ENCODE measurements at regions of chr22 and their contacts with region 1.

Region 1: GRCh38 chr22:28051787-28052356 is 132.8 kb upstream of the PITPNB start:
- DNase-seq: peak; percentile 56 to 84 (median 79)
- H3K4me3 ChIP-seq: no peak overlapping the region
- H3K27ac ChIP-seq: no peak overlapping the region
- H3K4me1 ChIP-seq: no peaks in the 10 kb centered on the region
- H3K27me3 ChIP-seq: no peaks in the 10 kb centered on the region
- CTCF ChIP-seq: peak; percentile 66 to 77 (median 73)
- EP300 ChIP-seq: no peak
- POLR2A ChIP-seq: no peak

Region 2: GRCh38 chr22:28442264-28442710 is 390.4 kb after region 1 on chr22:
- intact Hi-C with region 1: loop called in 1 of 4 experiments (anchors 5 kb)
- DNase-seq: peak; percentile 80 to 91 (median 86)
- H3K4me3 ChIP-seq: peak overlapping the region; percentile 56
- H3K27ac ChIP-seq: peak overlapping the region; percentile 28 to 79
- H3K4me1 ChIP-seq: peaks cover 13% of the 10 kb centered on the region
- H3K27me3 ChIP-seq: no peaks in the 10 kb centered on the region
- CTCF ChIP-seq: peak; percentile 72 to 80 (median 78)
- EP300 ChIP-seq: no peak
- POLR2A ChIP-seq: no peak

Region 3: DNA sequence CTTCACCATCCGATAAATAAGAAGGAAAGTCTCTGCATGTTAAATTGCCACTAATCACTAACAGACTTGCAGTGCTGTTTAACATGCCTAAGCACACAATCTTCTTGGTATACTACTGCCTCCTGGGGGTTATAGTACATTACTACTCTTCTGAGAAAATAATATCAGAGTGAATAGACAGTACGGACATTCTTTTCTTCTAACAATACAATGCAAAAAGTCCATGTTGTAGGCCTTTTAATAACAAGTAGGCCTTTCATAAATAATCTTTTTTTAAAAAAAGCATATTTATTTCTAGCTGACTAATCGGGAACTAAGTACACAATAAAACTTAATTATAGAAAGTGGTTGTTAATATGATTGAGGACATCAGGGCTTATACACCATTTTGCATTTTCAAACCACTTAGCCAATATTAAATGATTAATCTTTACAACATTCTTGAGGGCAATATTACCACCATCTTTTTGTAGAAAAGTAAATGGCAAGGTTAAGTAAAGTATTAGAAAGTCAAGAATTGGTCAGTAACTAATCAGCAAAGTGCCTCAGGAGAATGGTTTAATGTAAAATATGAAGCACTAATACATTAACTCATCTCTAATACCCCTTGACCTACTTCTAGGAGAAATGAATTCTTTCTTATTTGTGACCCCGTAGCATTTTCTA is 543.1 kb after region 1 on chr22:
- intact Hi-C with region 1: loop called in 2 of 4 experiments (anchors 2 to 5 kb)
- DNase-seq: no peak
- H3K4me3 ChIP-seq: no peak overlapping the region
- H3K27ac ChIP-seq: no peak overlapping the region
- H3K4me1 ChIP-seq: no peaks in the 10 kb centered on the region
- H3K27me3 ChIP-seq: no peaks in the 10 kb centered on the region
- CTCF ChIP-seq: peak; percentile 42 to 87 (median 79)
- EP300 ChIP-seq: no peak
- POLR2A ChIP-seq: no peak

Measured in ovary (tissue), 10 donors.